Endothelial cell of umbilical vein (primary cell): ENCODE measurements at regions of chr4 and their contacts with region 1.

Region 1: GRCh38 chr4:185597532-185598188 is 62.4 kb upstream of the PDLIM3 start:
- DNase-seq: peak; percentile 84
- H3K4me3 ChIP-seq: no peak overlapping the region
- H3K27ac ChIP-seq: no peak overlapping the region
- H3K4me1 ChIP-seq: no peaks in the 10 kb centered on the region
- H3K27me3 ChIP-seq: no peaks in the 10 kb centered on the region
- CTCF ChIP-seq: peak; percentile 95 to 96
- POLR2A ChIP-seq: no peak

Region 2: DNA sequence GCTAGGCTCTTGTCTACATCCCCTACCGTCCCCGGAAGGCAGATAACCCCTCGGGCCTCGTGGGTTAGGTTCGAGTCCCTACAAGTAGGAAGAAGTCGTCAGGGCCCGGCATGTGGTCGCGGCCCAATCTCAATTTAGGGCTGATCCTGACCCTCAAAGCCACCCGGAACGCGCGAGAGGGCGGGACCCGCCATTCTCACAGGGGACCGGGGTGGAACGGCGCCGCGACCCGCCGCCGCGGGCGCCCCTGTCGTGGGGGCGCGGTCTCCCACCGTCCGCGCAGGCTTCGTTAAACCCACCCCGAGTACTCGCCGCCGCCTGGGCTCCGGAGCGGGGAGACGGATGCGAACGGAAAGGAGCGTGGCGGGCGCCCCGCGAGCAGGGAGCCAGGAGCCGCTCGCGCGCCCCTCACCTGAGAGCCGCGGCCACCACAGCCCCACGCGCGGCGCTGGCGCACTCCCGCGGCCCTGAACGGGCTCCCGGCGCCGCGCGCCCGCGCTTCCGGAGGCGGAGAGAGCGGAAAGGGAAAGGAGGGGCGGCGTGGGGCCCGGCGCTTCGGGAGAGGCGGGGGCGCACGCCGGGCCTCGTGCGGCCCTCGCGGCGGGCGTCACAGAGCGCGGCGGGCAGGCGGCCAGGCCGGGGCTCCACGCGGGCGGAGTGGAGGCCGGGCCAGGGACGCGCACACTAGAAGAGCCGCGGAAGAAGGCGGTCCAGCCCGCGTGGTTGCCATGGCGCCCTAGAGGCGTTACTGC is 394.0 kb before region 1 on chr4 and contains the start of gene CFAP97:
- CTCF ChIA-PET with region 1: interaction called, 8 read pairs
- POLR2A ChIA-PET with region 1: no interaction called
- dilution Hi-C with region 1: no loop called
- intact Hi-C with region 1: loop called (anchors 5 kb)
- DNase-seq: peak; percentile 90
- H3K4me3 ChIP-seq: peak within 1 kb of the TSS; percentile 60 to 89 (median 64)
- H3K27ac ChIP-seq: peak within 1 kb of the TSS; percentile 79
- H3K4me1 ChIP-seq: peaks cover 34% of the 10 kb centered on the region
- H3K27me3 ChIP-seq: no peaks in the 10 kb centered on the region
- CTCF ChIP-seq: no peak
- POLR2A ChIP-seq: peak; percentile 43
- total RNA-seq, gene CFAP97: 17.6 and 22.4 TPM in 2 replicates

Region 3: DNA sequence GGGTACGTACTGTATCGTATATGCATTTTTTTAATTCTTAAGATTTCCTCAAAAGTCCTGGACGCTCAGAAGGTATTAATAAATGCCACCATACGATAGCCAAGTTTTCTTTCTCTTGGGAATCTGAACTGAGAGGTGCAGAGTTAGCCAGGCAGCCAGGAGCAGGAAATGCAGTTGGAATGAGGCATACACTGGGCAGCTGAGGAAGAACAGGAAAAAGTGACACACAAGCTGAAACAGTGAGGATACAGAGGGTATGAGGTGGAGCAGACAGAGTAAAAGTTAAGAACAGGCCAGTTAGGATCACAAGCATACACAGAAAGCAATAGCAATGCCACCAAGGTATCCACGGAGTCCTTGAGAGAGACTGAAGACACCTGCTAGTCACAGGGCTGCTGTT is 185.2 kb before region 1 on chr4:
- CTCF ChIA-PET with region 1: interaction called, 10 read pairs
- POLR2A ChIA-PET with region 1: no interaction called
- dilution Hi-C with region 1: no loop called
- intact Hi-C with region 1: loop called (anchors 5 kb)
- DNase-seq: peak; percentile 88
- H3K4me3 ChIP-seq: no peak overlapping the region
- H3K27ac ChIP-seq: peak overlapping the region; percentile 87
- H3K4me1 ChIP-seq: peaks cover 21% of the 10 kb centered on the region
- H3K27me3 ChIP-seq: no peaks in the 10 kb centered on the region
- CTCF ChIP-seq: no peak
- POLR2A ChIP-seq: no peak

Region 4: GRCh38 chr4:185513489-185514181 is 84.0 kb before region 1 on chr4:
- CTCF ChIA-PET with region 1: interaction called, 27 read pairs
- POLR2A ChIA-PET with region 1: no interaction called
- dilution Hi-C with region 1: no loop called
- intact Hi-C with region 1: no loop called
- DNase-seq: peak; percentile 86
- H3K4me3 ChIP-seq: peak overlapping the region in 1 of 3 experiments; percentile 10
- H3K27ac ChIP-seq: peak overlapping the region; percentile 85
- H3K4me1 ChIP-seq: peaks cover 24% of the 10 kb centered on the region
- H3K27me3 ChIP-seq: no peaks in the 10 kb centered on the region
- CTCF ChIP-seq: no peak
- POLR2A ChIP-seq: no peak

Region 5: GRCh38 chr4:185559913-185560281 is 37.8 kb before region 1 on chr4:
- CTCF ChIA-PET with region 1: interaction called, 17 read pairs
- POLR2A ChIA-PET with region 1: no interaction called
- dilution Hi-C with region 1: no loop called
- intact Hi-C with region 1: loop called (anchors 2 kb)
- DNase-seq: peak; percentile 82
- H3K4me3 ChIP-seq: no peak overlapping the region
- H3K27ac ChIP-seq: peak overlapping the region; percentile 68
- H3K4me1 ChIP-seq: peaks cover 10% of the 10 kb centered on the region
- H3K27me3 ChIP-seq: no peaks in the 10 kb centered on the region
- CTCF ChIP-seq: no peak
- POLR2A ChIP-seq: no peak

Region 6: GRCh38 chr4:186021461-186022167 is 424.0 kb after region 1 on chr4:
- CTCF ChIA-PET with region 1: interaction called, 41 read pairs
- POLR2A ChIA-PET with region 1: no interaction called
- dilution Hi-C with region 1: no loop called
- intact Hi-C with region 1: no loop called
- DNase-seq: peak; percentile 69
- H3K4me3 ChIP-seq: no peak overlapping the region
- H3K27ac ChIP-seq: no peak overlapping the region
- H3K4me1 ChIP-seq: no peaks in the 10 kb centered on the region
- H3K27me3 ChIP-seq: no peaks in the 10 kb centered on the region
- CTCF ChIP-seq: peak; percentile 73 to 82
- POLR2A ChIP-seq: no peak